Naive thymus-derived CD8-positive, alpha-beta T cell (primary cell): ENCODE measurements at regions of chr1 and their contacts with region 1.

Region 1: DNA sequence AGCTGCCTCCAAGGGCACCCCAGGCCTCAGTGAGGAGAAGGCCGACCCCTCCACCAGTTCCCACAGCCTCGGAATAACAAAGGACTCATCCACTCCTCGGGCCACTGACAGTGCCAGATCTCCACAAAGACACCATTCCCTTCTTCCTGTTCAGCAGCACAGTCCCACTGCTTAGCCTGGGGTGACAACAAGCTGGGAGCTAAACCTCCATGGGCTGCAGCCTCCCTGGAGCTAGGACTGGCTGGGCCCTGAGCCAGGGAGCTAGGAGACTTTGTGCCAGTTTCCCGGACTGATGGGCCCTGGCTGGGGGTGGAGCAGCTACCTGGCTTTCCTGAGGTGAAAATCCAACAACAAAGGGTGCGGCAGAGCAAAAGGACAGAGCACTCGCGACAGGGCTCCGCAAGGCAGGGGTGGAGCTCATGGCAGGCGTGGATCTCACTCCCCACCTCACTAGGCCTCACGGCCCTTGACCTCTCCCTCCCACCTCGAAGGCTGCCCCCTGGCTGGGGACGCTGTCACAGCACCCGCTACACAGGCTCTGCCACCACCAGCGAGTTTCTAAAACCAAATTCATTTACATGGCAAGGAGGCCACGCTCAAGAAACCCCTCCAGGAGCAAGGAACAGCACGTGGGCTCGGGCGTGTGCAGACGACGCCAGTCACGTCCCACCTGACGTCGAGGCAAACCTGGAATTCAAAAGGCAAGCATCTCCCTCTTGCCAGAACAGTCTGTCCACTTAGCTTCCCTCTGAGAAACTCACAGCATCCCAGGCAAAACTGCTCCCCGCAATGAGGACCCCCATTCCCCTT is 13.8 kb downstream of the SLC35E2B start:
- DNase-seq: peak in 5 of 10 donors; percentile 44 to 63 (median 54)
- ATAC-seq: peak; percentile 27 to 51
- H3K4me3 Mint-ChIP-seq: peak overlapping the region; percentile 83 to 96 (median 93)
- H3K27ac Mint-ChIP-seq: peak overlapping the region; percentile 96 to 99 (median 98)
- H3K4me1 Mint-ChIP-seq: peaks cover 21 to 60% (median 37%) of the 10 kb centered on the region in 4 donors
- H3K27me3 Mint-ChIP-seq: no peaks in the 10 kb centered on the region

Region 2: DNA sequence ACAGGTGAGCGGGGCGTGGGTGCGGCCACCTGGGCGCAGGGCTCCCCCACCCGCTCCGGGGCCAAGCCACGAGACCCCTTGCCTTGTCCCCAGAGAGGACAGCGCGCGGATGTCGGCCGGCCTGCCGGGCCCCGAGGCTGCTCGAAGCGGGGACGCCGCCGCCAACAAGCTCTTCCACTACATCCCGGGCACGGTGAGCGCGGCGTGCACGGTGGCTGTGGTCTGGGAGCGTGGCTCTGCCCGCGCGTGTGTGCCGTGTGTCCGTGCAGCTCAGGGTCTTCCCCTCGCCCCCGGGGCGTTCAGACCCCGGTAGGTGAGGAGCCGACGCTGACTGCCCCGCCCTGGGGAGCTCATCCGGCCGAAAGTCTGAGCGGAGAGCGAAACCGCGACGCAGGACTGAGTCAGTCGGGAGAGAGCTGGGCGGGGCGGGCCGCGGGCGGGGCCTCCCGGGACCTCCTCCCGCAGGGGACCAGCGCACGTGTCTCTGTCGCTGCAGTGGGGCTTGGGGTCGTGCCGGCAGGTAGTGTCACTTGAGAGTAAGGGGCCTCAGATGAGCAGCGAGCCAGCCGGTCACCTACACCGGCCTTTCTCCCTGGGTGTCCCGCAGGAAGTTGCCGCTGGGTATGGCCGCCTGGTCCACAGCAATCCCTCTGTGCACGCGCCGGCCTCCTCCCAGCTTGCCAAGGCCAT is 712.0 kb before region 1 on chr1:
- POLR2A ChIA-PET with region 1: no interaction called
- DNase-seq: peak; percentile 28 to 85 (median 56)
- ATAC-seq: peak; percentile 87 to 90
- H3K4me3 Mint-ChIP-seq: peak overlapping the region; percentile 64 to 86 (median 80)
- H3K27ac Mint-ChIP-seq: peak overlapping the region in 2 of 10 donors; percentile 37 to 75
- H3K4me1 Mint-ChIP-seq: peaks cover 0 to 9% (median 4%) of the 10 kb centered on the region in 4 donors
- H3K27me3 Mint-ChIP-seq: peaks cover 6 to 17% (median 10%) of the 10 kb centered on the region in 5 donors

Region 3: DNA sequence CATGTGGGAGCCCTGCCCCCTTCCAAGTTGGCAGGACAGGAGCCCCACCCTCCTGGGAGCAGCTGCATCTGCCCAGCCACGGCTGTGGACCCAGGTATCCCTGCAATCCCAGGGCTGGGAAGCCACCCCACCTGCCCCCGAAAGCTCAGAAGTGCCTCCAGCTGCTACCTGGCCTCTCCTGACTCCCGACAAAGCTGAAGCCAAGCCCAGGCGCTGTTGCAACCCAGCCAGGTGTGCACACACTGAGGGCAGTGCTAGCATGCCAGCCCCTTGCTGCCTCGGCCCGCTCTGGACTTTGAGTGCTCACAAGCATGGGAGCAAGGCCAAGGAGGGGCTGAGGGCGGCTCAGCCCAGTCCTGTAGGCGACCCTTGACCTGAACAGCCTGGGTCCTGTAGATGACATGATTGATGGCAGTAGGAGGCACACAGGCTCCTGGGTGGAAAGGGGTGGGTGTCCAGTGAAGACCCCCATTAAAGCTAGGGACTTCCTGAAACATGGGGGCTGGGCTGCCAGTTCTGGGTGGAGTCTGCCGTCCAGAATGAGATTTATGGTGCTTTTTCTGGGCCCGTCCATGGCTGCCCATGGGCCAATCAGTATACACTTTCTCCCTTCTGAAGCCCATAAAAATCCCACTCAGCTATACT is 101.3 kb before region 1 on chr1:
- POLR2A ChIA-PET with region 1: no interaction called
- DNase-seq: no peak
- ATAC-seq: no peak
- H3K4me3 Mint-ChIP-seq: no peak overlapping the region
- H3K27ac Mint-ChIP-seq: no peak overlapping the region
- H3K4me1 Mint-ChIP-seq: peaks cover 10 to 26% (median 19%) of the 10 kb centered on the region in 4 donors
- H3K27me3 Mint-ChIP-seq: peaks cover 0 to 11% (median 1%) of the 10 kb centered on the region in 5 donors

Region 4: DNA sequence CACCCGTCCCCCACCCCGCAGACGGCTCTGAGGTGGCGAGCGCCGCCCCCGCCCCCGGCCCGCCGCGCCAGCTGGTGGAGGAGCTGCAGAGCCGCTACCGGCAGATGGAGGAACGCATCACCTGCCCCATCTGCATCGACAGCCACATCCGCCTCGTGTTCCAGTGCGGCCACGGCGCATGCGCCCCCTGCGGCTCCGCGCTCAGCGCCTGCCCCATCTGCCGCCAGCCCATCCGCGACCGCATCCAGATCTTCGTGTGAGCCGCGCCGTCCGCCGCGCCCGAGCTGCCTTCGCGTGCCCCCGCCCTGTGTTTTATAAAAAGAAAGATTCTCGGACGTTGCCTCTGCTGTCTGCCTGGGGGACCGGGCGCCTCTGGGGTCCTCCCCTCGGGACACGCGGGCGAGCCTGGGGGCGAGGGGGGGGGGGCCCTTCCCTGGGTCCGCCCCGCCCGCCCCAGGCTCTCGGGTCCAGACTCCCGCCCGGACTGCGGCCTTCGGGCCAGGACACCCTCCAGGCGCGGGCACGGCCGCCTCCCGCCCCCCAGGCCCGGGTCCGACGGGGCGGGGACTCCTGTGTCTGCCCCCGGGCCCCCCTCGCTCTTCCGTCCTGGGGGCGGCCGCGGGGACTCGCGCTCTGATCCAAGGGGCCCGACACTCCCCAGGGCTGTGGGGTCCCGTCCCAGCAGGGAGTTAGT is 48.4 kb before region 1 on chr1:
- POLR2A ChIA-PET with region 1: interaction called, 10 read pairs
- DNase-seq: peak; percentile 90 to 97 (median 94)
- ATAC-seq: peak; percentile 73 to 78
- H3K4me3 Mint-ChIP-seq: peak overlapping the region; percentile 85 to 94 (median 91)
- H3K27ac Mint-ChIP-seq: peak overlapping the region; percentile 83 to 99 (median 95)
- H3K4me1 Mint-ChIP-seq: peaks cover 4 to 12% (median 7%) of the 10 kb centered on the region in 4 donors
- H3K27me3 Mint-ChIP-seq: peaks cover 0 to 4% (median 0%) of the 10 kb centered on the region in 5 donors